ENCODE measurements at regions of chr7 and their contacts with region 1.

Region 1: GRCh38 chr7:131513245-131514061 is 43.0 kb downstream of the PODXL start:
- DNase-seq: peak; percentile 88
- H3K4me3 ChIP-seq: no peak overlapping the region
- H3K27ac ChIP-seq: peak overlapping the region; percentile 67
- H3K4me1 ChIP-seq: peaks cover 21% of the 10 kb centered on the region
- H3K27me3 ChIP-seq: no peaks in the 10 kb centered on the region
- CTCF ChIP-seq: peak; percentile 97 to 100
- POLR2A ChIP-seq: no peak

Region 2: GRCh38 chr7:130553398-130554029 is 959.9 kb before region 1 on chr7:
- CTCF ChIA-PET with region 1: no interaction called
- POLR2A ChIA-PET with region 1: no interaction called
- dilution Hi-C with region 1: no loop called
- intact Hi-C with region 1: no loop called
- DNase-seq: no peak
- H3K4me3 ChIP-seq: no peak overlapping the region
- H3K27ac ChIP-seq: no peak overlapping the region
- H3K4me1 ChIP-seq: no peaks in the 10 kb centered on the region
- H3K27me3 ChIP-seq: no peaks in the 10 kb centered on the region
- CTCF ChIP-seq: no peak
- POLR2A ChIP-seq: no peak

Region 3: DNA sequence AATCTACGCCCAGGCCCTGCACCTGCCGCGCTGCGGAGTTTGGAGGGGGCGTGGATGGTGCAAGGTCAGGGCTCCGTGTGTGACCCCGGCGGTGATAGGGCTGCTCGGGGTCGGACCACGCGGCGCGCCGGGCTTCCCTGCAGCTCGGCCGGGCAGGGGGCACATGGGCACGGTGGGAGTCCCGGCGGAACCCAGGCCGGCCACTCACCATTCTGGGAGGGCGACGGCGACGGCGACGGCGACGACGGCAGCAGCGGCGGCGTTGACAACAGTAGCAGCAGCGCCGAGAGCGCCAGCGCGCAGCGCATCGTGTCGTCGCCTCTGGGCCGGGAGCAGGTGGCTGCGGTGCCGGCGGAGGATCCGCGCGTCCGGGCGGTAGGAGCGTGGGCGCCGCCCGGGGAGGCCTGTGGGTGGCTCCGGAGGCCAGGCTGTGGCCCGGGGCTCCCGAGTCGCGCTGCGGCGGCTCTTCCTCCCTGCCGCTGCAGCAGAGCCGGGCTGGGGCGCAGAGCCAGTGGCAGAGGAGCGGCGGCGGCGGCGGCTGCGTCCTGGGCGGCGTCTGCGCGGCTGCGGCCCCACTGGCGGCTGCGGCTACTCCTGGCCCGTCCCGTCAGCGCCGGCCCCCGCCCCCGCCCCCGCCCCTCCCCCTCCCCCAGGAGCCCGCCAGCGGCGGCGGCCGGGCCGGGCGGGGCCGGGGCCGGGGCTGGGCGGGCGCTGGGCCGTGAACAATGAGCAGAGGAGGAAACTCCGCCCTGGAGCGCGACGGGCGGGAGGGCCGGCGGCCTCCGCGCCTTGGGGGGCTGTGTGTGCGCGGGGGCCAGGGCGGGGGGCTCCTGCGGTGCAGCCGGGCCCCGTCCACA is 42.8 kb after region 1 on chr7 and contains the start of gene PODXL:
- CTCF ChIA-PET with region 1: interaction called, 6 read pairs
- POLR2A ChIA-PET with region 1: no interaction called
- dilution Hi-C with region 1: no loop called
- intact Hi-C with region 1: loop called (anchors 2 kb)
- DNase-seq: peak; percentile 75
- H3K4me3 ChIP-seq: peak within 1 kb of the TSS; percentile 78 to 82 (median 79)
- H3K27ac ChIP-seq: peak within 1 kb of the TSS; percentile 68
- H3K4me1 ChIP-seq: peaks cover 29% of the 10 kb centered on the region
- H3K27me3 ChIP-seq: no peaks in the 10 kb centered on the region
- CTCF ChIP-seq: no peak
- POLR2A ChIP-seq: peak; percentile 75
- total RNA-seq, gene PODXL: 156 and 264 TPM in 2 replicates